CD4-positive, alpha-beta memory T cell (primary cell): ENCODE measurements at regions of chr2 and their contacts with region 1.

Region 1: GRCh38 chr2:198611201-198611600 is 806.8 kb downstream of the PLCL1 start:
- DNase-seq: no peak
- H3K4me3 ChIP-seq: no peak overlapping the region
- H3K4me3 Mint-ChIP-seq: no peak overlapping the region
- H3K27ac ChIP-seq: no peak overlapping the region
- H3K27ac Mint-ChIP-seq: no peak overlapping the region
- H3K4me1 ChIP-seq: no peaks in the 10 kb centered on the region
- H3K4me1 Mint-ChIP-seq: no peaks in the 10 kb centered on the region
- H3K27me3 ChIP-seq: no peaks in the 10 kb centered on the region
- H3K27me3 Mint-ChIP-seq: no peaks in the 10 kb centered on the region

Region 2: GRCh38 chr2:198731842-198732399 is 120.7 kb after region 1 on chr2:
- CTCF ChIA-PET with region 1: no interaction called
- POLR2A ChIA-PET with region 1: no interaction called
- intact Hi-C with region 1: loop called (anchors 5 kb)
- DNase-seq: no peak
- H3K4me3 ChIP-seq: no peak overlapping the region
- H3K4me3 Mint-ChIP-seq: no peak overlapping the region
- H3K27ac ChIP-seq: no peak overlapping the region
- H3K27ac Mint-ChIP-seq: no peak overlapping the region
- H3K4me1 ChIP-seq: no peaks in the 10 kb centered on the region
- H3K4me1 Mint-ChIP-seq: no peaks in the 10 kb centered on the region
- H3K27me3 ChIP-seq: no peaks in the 10 kb centered on the region
- H3K27me3 Mint-ChIP-seq: peaks cover 0 to 5% of the 10 kb centered on the region in 2 donors